Activated T-helper 1 cell treated with anti-CD3 and anti-CD28 coated beads, Interleukin-12 subunit alpha, Interleukin-12 subunit beta, Interleukin-2, Interleukin-4 antibody, amounts not matched to agents 30 ng/mL and 10 ng/mL and 1 ng/mL, durations not matched to agents 14 hours and 24 hours and 36 hours (primary cell): ENCODE measurements at regions of chr15 and their contacts with region 1.

Region 1: DNA sequence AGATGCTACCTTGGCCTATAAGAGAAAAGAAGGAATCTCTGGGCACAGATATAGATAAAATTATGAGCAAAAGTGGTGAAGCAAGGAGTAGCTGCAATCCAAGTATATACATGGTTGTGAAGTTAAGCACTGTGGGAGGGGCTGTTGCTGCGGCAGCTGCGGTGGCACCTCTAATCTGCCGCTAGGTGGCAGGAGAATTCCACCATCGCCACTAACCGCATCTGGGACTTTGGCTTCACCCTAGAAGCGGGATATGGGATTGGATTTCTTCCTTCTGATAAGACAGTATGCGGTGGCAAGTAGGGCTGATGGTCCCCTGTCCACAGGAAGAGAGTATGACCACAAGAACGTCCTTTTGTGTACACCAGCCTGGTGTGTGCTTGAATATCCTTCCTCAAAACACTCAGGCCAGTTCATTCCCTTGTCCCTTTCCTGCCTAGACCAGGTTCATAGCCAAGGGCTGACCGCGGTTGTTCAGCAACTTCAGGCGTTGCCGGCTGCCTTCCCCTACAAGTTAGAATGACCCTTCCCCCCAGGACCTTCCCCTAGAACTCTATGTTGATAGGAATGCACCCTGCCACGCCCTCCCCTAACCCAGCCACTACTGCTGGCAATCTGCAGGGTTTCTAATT is 5.1 kb downstream of the MAGEL2 start:
- DNase-seq: no peak
- H3K4me3 Mint-ChIP-seq: no peak overlapping the region
- H3K27ac Mint-ChIP-seq: no peak overlapping the region
- H3K4me1 Mint-ChIP-seq: no peaks in the 10 kb centered on the region
- H3K27me3 Mint-ChIP-seq: no peaks in the 10 kb centered on the region

Region 2: GRCh38 chr15:23877502-23878412 is 235.2 kb after region 1 on chr15:
- intact Hi-C with region 1: loop called (anchors 5 kb)
- DNase-seq: peak; percentile 3
- H3K4me3 Mint-ChIP-seq: no peak overlapping the region
- H3K27ac Mint-ChIP-seq: no peak overlapping the region
- H3K4me1 Mint-ChIP-seq: no peaks in the 10 kb centered on the region
- H3K27me3 Mint-ChIP-seq: no peaks in the 10 kb centered on the region